AG04449 (cell line): ENCODE measurements at regions of chr19 and their contacts with region 1.

Region 1: DNA sequence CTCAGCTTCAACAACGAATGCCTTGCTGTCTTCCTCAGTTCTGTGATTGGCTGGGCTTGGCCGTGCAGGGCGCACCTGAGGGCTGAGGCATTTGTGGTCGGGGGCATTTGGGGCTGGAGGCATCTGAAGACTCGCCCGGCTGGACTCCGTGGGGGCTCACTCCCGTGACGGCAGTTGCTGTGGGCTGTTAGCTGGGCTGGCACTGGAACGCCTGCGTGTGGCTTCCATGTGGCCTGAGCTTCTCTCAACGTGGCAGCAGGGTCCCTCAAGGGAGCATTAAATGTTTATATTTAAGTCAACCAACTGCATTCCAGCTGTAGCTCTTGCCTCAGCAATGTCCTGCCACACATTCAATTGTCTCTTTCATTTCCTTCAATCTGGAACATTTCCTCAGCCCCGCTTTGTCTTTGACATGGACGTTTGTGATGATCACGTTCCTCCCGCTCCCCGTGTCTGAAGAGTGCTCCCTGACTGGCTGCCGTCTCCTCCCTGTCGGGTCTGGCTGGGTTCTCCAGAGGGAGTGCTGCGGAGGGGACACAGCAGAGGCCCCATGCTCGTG is 21.0 kb downstream of the CCDC8 start:
- DNase-seq: no peak
- H3K4me3 ChIP-seq: no peak overlapping the region
- CTCF ChIP-seq: no peak

Region 2: GRCh38 chr19:46133101-46133682 is 259.1 kb before region 1 on chr19:
- CTCF ChIA-PET with region 1: no interaction called
- POLR2A ChIA-PET with region 1: no interaction called
- DNase-seq: peak; percentile 97
- H3K4me3 ChIP-seq: peak overlapping the region; percentile 19
- CTCF ChIP-seq: no peak

Region 3: DNA sequence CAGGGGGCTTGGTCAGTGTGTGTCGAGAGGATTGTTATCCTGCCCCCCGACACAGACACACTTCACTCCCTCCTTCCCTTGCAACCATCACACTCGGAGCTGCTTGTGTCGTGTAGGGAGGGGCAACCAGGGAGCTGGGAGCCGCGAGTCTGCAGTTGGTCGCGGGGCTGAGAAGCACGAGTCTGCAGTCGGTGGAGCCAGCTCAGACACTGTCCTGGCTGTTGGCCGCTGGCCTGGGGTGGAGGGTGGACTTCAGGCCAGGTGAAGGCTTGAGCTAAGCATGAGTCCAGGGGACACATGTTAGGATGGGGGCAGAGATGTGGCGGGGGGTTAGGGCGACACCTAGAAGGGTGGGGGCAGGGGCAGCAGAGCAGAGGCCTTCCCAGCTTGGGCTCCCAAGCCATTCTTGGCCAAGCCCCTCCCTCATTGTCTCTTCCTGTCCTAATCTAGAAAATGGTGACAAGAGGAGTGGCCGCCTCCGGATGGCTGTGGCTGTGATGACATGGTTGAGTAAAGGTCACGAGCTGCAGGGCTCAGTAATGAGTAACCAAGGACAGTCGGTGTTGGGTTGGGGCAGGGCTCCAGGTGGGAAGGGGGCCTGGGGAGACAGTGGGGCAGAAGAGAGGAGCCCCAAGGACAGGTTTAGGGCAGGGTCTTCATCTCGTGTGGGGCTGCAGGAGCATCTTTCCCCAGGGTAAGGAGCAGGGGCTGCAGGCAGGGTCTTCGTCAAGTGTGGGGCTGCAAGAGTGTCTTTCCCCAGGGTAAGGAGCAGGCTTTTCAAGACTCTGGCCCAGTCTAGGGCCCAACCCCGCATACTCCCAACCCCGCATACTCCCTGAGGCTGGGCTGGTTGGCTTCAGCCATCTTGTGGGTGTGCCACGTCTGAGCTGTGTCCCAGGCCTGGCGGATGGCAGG is 36.8 kb before region 1 on chr19:
- CTCF ChIA-PET with region 1: interaction called, 11 read pairs
- POLR2A ChIA-PET with region 1: no interaction called
- DNase-seq: no peak
- H3K4me3 ChIP-seq: no peak overlapping the region
- CTCF ChIP-seq: no peak

Region 4: GRCh38 chr19:46404055-46404752 is 11.9 kb after region 1 on chr19:
- CTCF ChIA-PET with region 1: interaction called, 35 read pairs
- POLR2A ChIA-PET with region 1: no interaction called
- DNase-seq: no peak
- H3K4me3 ChIP-seq: peak overlapping the region; percentile 43
- CTCF ChIP-seq: peak; percentile 54

Region 5: DNA sequence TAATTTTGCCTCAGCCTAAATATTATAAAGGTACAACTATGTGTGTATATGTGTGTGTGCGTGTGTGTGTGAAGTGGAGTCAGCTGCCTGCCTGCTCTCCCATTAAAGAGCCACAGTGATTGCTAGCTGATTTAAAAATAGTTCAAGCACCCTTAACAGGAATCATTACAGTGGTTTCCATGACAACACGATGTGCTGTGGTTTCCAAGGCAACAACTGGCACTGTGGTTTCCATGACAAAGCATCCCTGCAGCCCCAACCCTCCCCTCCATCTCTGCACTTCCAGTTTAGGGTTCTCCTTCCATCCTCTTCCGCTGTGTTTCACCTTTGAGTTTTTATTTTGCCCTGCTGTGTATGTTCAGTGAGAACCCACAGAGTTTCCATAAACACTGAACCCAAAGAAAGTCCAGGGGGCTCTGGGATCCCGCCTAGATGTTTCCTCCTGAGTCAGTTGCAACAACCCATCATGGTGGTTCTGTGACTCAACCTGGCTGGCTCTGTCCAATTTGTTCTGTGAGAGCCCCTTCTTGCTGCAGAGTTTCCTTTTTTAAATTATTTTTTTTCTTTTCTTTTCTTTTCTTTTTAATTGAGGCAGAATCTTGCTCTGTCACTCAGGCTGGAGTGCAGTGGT is 86.1 kb after region 1 on chr19:
- CTCF ChIA-PET with region 1: interaction called, 108 read pairs
- POLR2A ChIA-PET with region 1: no interaction called
- DNase-seq: no peak
- H3K4me3 ChIP-seq: no peak overlapping the region
- CTCF ChIP-seq: no peak

Region 6: DNA sequence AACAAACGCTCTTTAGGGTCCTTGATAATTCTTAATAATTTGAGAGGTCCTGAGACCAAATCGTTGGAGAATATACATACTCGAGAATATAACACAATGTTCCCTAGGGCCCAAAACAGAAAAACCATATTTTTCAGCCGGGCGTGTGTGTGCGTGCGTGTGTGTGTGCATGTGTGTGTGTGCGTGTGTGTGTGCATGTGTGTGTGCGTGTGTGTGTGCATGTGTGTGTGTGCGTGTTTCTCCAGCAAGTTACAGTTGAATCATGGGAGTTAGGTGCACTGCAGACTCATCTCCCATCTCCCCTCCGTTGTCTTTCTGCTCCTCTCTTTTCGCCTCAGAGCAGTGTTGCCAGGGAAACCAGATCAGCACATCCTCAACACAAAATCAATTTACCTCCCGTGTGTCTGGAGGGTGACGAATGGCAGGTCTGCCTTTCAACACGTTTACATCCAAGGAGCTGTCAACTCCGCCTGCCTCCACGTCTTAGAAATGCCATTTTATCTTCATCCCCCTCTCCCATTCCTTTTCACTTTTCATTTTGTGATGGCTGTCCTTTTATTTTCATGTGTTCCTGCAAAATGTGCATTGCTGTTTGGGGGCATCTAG is 111.6 kb after region 1 on chr19:
- CTCF ChIA-PET with region 1: interaction called, 11 read pairs
- POLR2A ChIA-PET with region 1: no interaction called
- DNase-seq: no peak
- H3K4me3 ChIP-seq: no peak overlapping the region
- CTCF ChIP-seq: no peak

Region 7: GRCh38 chr19:46529622-46530462 is 137.5 kb after region 1 on chr19:
- CTCF ChIA-PET with region 1: interaction called, 26 read pairs
- POLR2A ChIA-PET with region 1: no interaction called
- DNase-seq: peak; percentile 3
- H3K4me3 ChIP-seq: no peak overlapping the region; the same call in 1 of the 2 replicates
- CTCF ChIP-seq: peak; percentile 83